ENCODE measurements at regions of chr1 and their contacts with region 1.

Region 1: DNA sequence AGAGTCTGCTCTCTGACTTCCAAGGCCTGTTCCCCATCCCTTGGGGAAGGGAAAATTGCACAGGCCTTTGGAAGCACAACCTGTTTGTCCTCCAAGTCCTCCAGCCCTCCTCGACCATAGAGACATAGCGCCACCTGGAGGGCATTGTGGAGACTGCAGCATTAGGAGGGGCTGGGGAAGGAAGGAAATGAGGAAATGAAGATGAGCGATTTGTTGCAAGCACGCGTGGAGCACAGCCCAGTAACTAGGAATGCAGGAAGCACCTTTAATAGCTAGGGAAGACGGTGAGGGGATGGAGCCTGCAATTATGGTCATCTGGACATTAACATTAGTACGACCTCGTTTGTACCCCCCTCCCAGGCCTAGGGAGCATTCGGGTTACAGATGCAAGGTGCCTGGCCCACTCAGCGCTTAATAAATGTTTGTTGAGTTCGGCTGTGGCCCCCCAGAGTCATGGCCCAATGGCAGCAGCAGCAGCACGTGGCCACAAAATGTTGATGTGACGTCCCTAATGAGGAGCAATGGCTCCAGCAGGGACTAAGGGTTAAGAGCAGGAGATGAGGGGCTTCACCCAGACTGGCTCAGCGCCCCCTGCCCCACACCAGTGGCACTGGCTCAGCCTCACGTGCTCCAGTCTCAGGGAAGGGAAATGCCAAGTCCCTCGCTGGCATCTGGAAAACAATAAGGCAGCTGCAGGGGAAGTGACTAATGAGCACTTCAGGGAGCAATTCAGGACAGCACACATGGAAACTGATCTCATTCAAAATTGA is 8.0 kb upstream of the CAMK2N1 start:
- DNase-seq: peak; percentile 70 to 82 (median 72)
- H3K4me3 ChIP-seq: no peak overlapping the region
- H3K4me3 Mint-ChIP-seq: no peak overlapping the region
- H3K27ac ChIP-seq: no peak overlapping the region
- H3K27ac Mint-ChIP-seq: no peak overlapping the region
- H3K4me1 ChIP-seq: peaks cover 9% of the 10 kb centered on the region
- H3K4me1 Mint-ChIP-seq: peaks cover 0 to 1% (median 0%) of the 10 kb centered on the region in 4 donors
- H3K27me3 ChIP-seq: no peaks in the 10 kb centered on the region
- H3K27me3 Mint-ChIP-seq: peaks cover 0 to 1% of the 10 kb centered on the region in 2 donors

Region 2: DNA sequence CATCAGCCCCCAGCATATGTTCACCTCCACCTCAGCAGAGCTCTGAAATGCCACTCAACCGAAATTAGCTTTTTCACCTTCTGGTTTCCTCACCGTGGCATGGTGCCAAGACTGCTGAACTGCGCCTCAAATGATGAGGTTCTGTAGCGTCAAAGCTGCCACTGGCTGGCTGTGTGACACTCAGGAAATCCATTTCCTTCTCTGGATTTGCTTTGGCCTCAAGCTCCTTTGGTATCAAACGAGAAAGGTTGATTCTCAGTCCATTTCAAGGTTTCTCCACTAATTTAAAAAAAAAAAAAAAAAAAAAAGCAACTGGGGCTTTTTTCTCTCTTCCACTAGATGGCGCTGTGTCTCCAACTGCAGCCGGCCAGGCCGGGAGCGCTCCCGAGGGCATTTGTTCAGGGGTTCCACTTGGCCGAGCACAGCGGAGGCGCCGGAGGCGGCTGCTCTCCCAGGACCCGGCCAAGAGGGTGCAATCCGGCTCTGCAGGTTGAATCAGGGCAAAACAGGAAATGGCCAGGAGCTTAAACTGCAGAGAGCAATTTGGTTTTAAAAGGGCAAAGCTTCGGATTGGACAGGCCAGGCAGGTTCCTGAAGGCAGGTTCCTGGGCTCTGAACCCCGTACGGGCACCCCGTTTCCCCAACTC is 281.2 kb before region 1 on chr1:
- CTCF ChIA-PET with region 1: interaction called, 80 read pairs
- POLR2A ChIA-PET with region 1: no interaction called
- intact Hi-C with region 1: loop called (anchors 1 kb)
- DNase-seq: peak; percentile 50 to 64 (median 52)
- H3K4me3 ChIP-seq: no peak overlapping the region
- H3K4me3 Mint-ChIP-seq: peak overlapping the region in 6 of 8 donors; percentile 40 to 76 (median 67)
- H3K27ac ChIP-seq: no peak overlapping the region
- H3K27ac Mint-ChIP-seq: peak overlapping the region in 2 of 7 donors; percentile 10 to 16
- H3K4me1 ChIP-seq: peaks cover 9% of the 10 kb centered on the region
- H3K4me1 Mint-ChIP-seq: peaks cover 2 to 8% (median 3%) of the 10 kb centered on the region in 4 donors
- H3K27me3 ChIP-seq: peaks cover 21% of the 10 kb centered on the region
- H3K27me3 Mint-ChIP-seq: peaks cover 24 to 36% of the 10 kb centered on the region in 2 donors

Region 3: GRCh38 chr1:20233394-20233793 is 260.6 kb before region 1 on chr1:
- CTCF ChIA-PET with region 1: interaction called, 7 read pairs
- POLR2A ChIA-PET with region 1: no interaction called
- intact Hi-C with region 1: loop called (anchors 1 kb)
- DNase-seq: peak in 3 of 5 donors; percentile 14 to 22 (median 19)
- H3K4me3 ChIP-seq: no peak overlapping the region
- H3K4me3 Mint-ChIP-seq: no peak overlapping the region
- H3K27ac ChIP-seq: no peak overlapping the region
- H3K27ac Mint-ChIP-seq: no peak overlapping the region
- H3K4me1 ChIP-seq: no peaks in the 10 kb centered on the region
- H3K4me1 Mint-ChIP-seq: no peaks in the 10 kb centered on the region
- H3K27me3 ChIP-seq: no peaks in the 10 kb centered on the region
- H3K27me3 Mint-ChIP-seq: peaks cover 19 to 38% of the 10 kb centered on the region in 2 donors

Region 4: DNA sequence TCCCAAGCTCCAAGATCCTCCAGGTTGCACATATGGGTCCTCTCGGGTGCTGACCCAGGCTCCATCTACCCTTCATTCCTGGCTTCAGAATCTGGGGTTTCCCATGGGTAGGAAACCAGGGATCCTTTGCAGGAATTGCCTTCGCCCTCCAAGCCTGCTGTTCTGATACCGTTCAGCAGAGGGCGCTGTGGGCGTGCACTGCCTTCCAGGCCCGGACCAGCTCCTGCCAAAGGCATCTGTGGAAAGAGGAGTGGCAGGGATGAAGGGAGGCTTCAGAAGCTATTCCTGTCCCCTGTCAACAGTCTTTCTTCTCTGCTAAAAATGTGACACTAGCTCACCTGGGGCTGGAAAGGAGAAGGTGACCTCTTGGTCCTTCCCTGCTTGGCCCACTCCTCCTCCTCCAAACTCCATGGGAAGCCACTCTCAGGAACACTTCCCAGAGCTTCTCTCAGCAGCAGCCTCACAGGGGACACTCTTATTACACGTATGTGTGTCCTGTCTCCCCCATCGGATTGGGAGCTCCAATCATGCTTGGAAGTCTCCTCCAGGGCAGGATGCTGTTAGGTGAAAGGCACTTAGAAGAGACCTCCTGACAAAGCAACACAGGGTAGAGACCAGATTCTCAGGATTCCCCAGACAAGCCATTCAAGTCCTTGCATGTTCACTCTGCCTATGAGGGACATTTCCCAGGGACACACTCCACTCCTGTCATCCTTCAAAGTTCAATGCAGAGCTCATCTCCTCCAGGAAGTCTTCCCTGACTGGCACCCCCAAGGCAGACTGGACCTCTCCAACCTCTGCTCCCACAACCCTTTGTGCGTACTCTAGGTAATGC is 132.0 kb before region 1 on chr1:
- CTCF ChIA-PET with region 1: interaction called, 20 read pairs
- POLR2A ChIA-PET with region 1: no interaction called
- intact Hi-C with region 1: loop called (anchors 5 kb)
- DNase-seq: peak in 1 of 5 donors; percentile 6
- H3K4me3 ChIP-seq: no peak overlapping the region
- H3K4me3 Mint-ChIP-seq: no peak overlapping the region
- H3K27ac ChIP-seq: no peak overlapping the region
- H3K27ac Mint-ChIP-seq: no peak overlapping the region
- H3K4me1 ChIP-seq: no peaks in the 10 kb centered on the region
- H3K4me1 Mint-ChIP-seq: peaks cover 3 to 10% (median 9%) of the 10 kb centered on the region in 4 donors
- H3K27me3 ChIP-seq: peaks cover 15% of the 10 kb centered on the region
- H3K27me3 Mint-ChIP-seq: peaks cover 37 to 43% of the 10 kb centered on the region in 2 donors

Region 5: GRCh38 chr1:20376880-20377494 is 117.0 kb before region 1 on chr1:
- CTCF ChIA-PET with region 1: interaction called, 14 read pairs
- POLR2A ChIA-PET with region 1: no interaction called
- intact Hi-C with region 1: no loop called
- DNase-seq: peak in 4 of 5 donors; percentile 20 to 48 (median 36)
- H3K4me3 ChIP-seq: no peak overlapping the region
- H3K4me3 Mint-ChIP-seq: no peak overlapping the region
- H3K27ac ChIP-seq: no peak overlapping the region
- H3K27ac Mint-ChIP-seq: no peak overlapping the region
- H3K4me1 ChIP-seq: no peaks in the 10 kb centered on the region
- H3K4me1 Mint-ChIP-seq: peaks cover 0 to 6% (median 1%) of the 10 kb centered on the region in 4 donors
- H3K27me3 ChIP-seq: peaks cover 4% of the 10 kb centered on the region
- H3K27me3 Mint-ChIP-seq: peaks cover 16 to 32% of the 10 kb centered on the region in 2 donors

Region 6: GRCh38 chr1:20469406-20470076 is 24.5 kb before region 1 on chr1:
- CTCF ChIA-PET with region 1: interaction called, 4 read pairs
- POLR2A ChIA-PET with region 1: no interaction called
- intact Hi-C with region 1: loop called (anchors 1 kb)
- DNase-seq: no peak
- H3K4me3 ChIP-seq: no peak overlapping the region
- H3K4me3 Mint-ChIP-seq: no peak overlapping the region
- H3K27ac ChIP-seq: no peak overlapping the region
- H3K27ac Mint-ChIP-seq: peak overlapping the region in 1 of 7 donors; percentile 4
- H3K4me1 ChIP-seq: no peaks in the 10 kb centered on the region
- H3K4me1 Mint-ChIP-seq: no peaks in the 10 kb centered on the region
- H3K27me3 ChIP-seq: no peaks in the 10 kb centered on the region
- H3K27me3 Mint-ChIP-seq: peaks cover 25 to 61% of the 10 kb centered on the region in 2 donors

Region 7: DNA sequence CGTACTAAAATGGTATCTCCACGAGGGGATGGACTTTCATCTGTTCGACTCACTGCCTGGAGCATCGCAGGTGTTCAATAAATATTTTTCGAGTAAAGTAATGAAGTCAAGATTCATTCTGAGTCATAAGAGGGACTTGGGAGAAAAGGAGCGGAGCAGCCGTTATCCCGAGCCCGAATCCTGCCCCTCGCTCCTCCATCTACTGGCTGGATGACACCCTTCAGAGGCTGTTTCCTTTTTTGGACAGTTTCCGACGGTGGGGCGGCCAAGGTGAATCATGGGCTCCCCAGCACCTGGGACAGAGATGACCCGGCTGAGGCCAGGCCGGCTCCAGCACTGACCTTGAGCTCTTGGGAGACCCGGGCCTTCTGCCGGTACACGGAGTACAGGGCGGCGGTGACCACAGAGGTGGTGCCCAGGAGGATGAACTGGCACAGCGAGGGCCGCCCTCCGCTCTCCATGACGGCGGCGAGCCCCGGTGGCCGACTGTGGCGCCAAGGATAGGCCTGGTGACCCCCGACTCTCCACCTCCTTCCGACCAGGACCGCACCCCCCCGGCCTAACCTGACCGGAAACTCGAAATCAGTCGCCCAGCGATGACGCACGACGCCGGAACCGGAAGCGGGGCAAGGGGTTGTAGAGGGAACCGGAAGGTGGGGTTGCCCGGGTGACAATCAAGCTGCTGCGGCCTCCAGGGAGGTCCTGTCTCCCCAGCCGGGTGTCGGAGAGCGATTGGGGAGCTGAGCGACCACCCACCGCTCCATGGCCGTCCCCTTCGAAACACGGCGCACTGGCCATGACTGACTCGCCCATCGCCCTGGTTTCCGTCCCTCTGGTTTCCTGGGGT is 13.8 kb after region 1 on chr1 and contains the start of gene MUL1:
- CTCF ChIA-PET with region 1: interaction called, 24 read pairs
- POLR2A ChIA-PET with region 1: interaction called, 3 read pairs
- intact Hi-C with region 1: no loop called
- DNase-seq: peak; percentile 88 to 93 (median 90)
- H3K4me3 ChIP-seq: peak within 1 kb of the TSS; percentile 84 to 91
- H3K4me3 Mint-ChIP-seq: peak within 1 kb of the TSS; percentile 84 to 95 (median 91)
- H3K27ac ChIP-seq: peak within 1 kb of the TSS; percentile 91
- H3K27ac Mint-ChIP-seq: peak within 1 kb of the TSS; percentile 77 to 99 (median 94)
- H3K4me1 ChIP-seq: peaks cover 30% of the 10 kb centered on the region
- H3K4me1 Mint-ChIP-seq: peaks cover 11 to 31% (median 21%) of the 10 kb centered on the region in 4 donors
- H3K27me3 ChIP-seq: peaks cover 6% of the 10 kb centered on the region
- H3K27me3 Mint-ChIP-seq: peaks cover 0 to 3% of the 10 kb centered on the region in 2 donors
- total RNA-seq, gene MUL1: 21.4 to 22.2 TPM